ENCODE measurements at regions of chr17 and their contacts with region 1.

Region 1: GRCh38 chr17:43994272-43995149 is 9.9 kb upstream of the NAGS start:
- DNase-seq: peak; percentile 77
- CTCF ChIP-seq: peak; percentile 82

Region 2: DNA sequence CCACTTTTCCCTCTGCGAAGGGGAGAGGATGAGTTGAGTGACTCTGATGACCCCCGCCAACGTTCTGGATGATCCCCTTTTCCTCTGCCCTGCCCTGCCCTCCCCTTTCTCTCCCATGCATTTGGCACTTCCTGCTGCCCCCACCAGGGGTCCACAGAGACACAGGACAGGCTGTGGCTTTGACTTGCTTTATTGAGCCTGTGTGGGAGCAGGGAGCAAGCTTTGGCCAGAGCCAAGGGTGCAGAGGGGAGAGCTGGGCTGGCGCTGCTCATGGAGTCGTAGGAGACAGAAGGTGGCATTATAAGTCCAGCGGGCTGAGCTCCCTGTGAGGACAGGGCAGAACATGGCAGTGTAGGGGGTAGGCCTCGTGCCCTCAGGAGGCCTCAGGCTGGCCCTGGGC is 53.9 kb before region 1 on chr17:
- in situ Hi-C with region 1: loop called (anchors 10 kb)
- DNase-seq: no peak
- CTCF ChIP-seq: peak; percentile 39